Transverse colon (tissue), 4 donors: ENCODE measurements at regions of chrX and their contacts with region 1.

Region 1: DNA sequence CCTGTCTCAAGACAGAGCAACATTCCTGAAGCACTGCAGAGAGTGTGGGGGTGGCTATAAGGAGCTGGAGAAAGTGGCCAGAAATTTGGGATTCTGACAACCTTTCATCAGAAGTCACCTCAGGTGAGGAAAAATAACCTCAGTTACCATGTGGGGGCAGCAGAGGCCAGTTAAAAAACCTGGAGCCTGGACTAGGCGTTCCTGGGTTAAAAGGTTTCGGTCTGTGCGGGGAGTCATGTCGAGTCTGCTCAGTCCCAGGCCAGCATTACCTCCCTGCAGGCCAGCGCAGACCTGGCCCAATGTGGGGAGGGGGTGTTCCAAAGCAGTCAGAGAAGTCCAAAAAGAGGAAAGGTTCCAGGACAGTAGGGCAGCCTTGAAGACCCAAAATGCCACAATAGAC is 10.9 kb upstream of the NALF2 start:
- DNase-seq: peak; percentile 22
- H3K4me3 ChIP-seq: no peak overlapping the region
- H3K27ac ChIP-seq: no peak overlapping the region
- H3K4me1 ChIP-seq: no peaks in the 10 kb centered on the region
- H3K27me3 ChIP-seq: no peaks in the 10 kb centered on the region
- CTCF ChIP-seq: peak in 4 of 5 experiments; percentile 26 to 42 (median 36)
- EP300 ChIP-seq: no peak
- POLR2A ChIP-seq: no peak

Region 2: GRCh38 chrX:69466546-69466945 is 26.6 kb before region 1 on chrX:
- in situ Hi-C with region 1: no loop called
- intact Hi-C with region 1: no loop called
- DNase-seq: no peak
- H3K4me3 ChIP-seq: no peak overlapping the region
- H3K27ac ChIP-seq: no peak overlapping the region
- H3K4me1 ChIP-seq: no peaks in the 10 kb centered on the region
- H3K27me3 ChIP-seq: no peaks in the 10 kb centered on the region
- CTCF ChIP-seq: no peak
- EP300 ChIP-seq: no peak
- POLR2A ChIP-seq: no peak

Region 3: DNA sequence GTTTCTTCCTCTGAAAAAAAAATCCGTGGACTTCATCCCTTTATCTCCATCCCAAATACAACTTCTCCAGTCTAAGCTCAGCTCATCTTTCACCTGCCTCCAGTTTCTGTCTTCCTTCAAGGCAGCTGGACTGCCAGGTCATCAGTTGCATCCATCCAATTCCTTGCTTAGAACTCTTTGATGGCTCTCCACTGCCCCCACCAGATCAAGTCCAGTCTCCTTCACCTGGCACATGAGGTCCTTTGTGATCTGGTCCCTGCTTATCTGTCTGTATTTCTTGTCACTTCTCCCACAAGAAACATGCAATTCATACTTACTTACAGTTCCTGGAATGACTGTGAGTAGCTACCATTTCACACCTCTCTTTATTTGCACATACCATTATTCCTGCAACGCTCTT is 602.9 kb after region 1 on chrX:
- in situ Hi-C with region 1: loop called in 1 of 4 experiments (anchors 25 kb)
- intact Hi-C with region 1: no loop called
- DNase-seq: no peak
- H3K4me3 ChIP-seq: no peak overlapping the region
- H3K27ac ChIP-seq: no peak overlapping the region
- H3K4me1 ChIP-seq: no peaks in the 10 kb centered on the region
- H3K27me3 ChIP-seq: no peaks in the 10 kb centered on the region
- CTCF ChIP-seq: no peak
- EP300 ChIP-seq: no peak
- POLR2A ChIP-seq: no peak

Region 4: DNA sequence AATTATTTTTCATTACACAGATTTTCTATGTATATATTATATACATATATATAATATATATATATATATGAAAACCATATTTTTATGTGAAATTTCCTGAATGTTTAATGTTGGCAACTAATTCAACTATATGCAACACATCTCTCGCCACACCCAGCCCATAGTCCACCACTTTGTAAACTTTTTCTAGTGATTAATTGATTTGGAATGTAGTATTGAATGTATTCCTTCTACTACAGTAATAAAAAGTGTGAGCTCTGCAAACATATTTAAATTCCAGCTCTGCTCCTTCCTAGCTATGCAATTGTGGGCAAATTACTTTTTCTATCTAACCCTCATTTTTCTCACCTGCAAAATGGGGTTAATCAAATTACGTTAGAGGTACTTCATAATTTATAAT is 1227.5 kb after region 1 on chrX:
- in situ Hi-C with region 1: no loop called
- intact Hi-C with region 1: no loop called
- DNase-seq: no peak
- H3K4me3 ChIP-seq: no peak overlapping the region
- H3K27ac ChIP-seq: no peak overlapping the region
- H3K4me1 ChIP-seq: no peaks in the 10 kb centered on the region
- H3K27me3 ChIP-seq: no peaks in the 10 kb centered on the region
- CTCF ChIP-seq: no peak
- EP300 ChIP-seq: no peak
- POLR2A ChIP-seq: no peak